Dorsolateral prefrontal cortex (tissue), 120 donors: ENCODE measurements at regions of chr11 and their contacts with region 1.

Region 1: GRCh38 chr11:78784321-78785061 is 209.8 kb upstream of the NARS2 start:
- DNase-seq: no peak
- H3K4me3 ChIP-seq: no peak overlapping the region
- H3K27ac ChIP-seq: no peak overlapping the region
- H3K27me3 ChIP-seq: no peaks in the 10 kb centered on the region
- CTCF ChIP-seq: no peak

Region 2: GRCh38 chr11:78840200-78840599 is 55.7 kb after region 1 on chr11:
- intact Hi-C with region 1: loop called in 1 of 2 experiments (anchors 5 kb)
- DNase-seq: no peak
- H3K4me3 ChIP-seq: no peak overlapping the region
- H3K27ac ChIP-seq: peak overlapping the region in 3 of 59 donors; percentile 2 to 35 (median 24)
- H3K27me3 ChIP-seq: no peaks in the 10 kb centered on the region
- CTCF ChIP-seq: no peak

Region 3: DNA sequence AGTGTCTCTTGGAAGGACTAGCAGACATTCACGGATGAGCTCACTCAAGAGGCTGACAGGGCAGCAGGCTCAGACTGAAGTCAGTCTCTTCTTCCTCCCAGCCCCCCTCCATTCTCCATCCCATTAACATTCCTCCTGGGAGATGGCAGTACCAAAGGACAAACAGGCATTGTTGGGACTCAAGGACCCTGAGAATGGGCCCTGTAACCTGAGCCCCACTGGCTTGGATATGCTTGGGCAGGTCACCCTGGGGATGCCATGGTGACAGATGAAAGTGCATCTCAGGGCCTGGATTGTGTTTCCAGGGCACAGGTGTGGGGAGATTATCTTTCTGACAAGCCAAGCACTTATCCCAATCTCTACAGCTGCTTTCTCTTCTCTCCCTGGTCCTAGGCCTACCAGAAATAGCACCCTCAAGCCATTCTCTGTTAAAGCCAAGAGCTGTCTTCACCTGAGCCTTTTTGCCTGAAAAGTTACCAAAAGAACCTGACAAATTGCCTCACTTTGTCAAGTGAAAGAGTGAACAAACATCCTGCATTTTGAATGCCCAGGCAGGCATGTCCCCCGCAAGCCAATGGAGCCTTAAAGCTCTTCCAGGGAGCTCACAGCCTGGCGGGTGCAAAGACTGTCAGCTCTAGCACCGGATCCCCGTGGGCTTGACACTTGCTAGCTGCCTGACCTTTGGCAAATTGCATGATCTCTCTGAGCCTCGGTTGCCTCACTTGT is 156.2 kb after region 1 on chr11:
- intact Hi-C with region 1: no loop called
- DNase-seq: no peak
- H3K4me3 ChIP-seq: no peak overlapping the region
- H3K27ac ChIP-seq: no peak overlapping the region
- H3K27me3 ChIP-seq: no peaks in the 10 kb centered on the region
- CTCF ChIP-seq: no peak